SK-N-SH (cell line): ENCODE measurements at regions of chr2 and their contacts with region 1.

Region 1: GRCh38 chr2:38377050-38377828 is at the start of gene ATL2:
- DNase-seq: peak; percentile 99
- H3K4me3 ChIP-seq: peak within 1 kb of the TSS; percentile 91 to 94
- H3K27ac ChIP-seq: peak within 1 kb of the TSS; percentile 81 to 94
- H3K4me1 ChIP-seq: peaks cover 14 to 16% of the 10 kb centered on the region in 2 experiments; a peak in 3 of 4 replicates
- H3K27me3 ChIP-seq: no peaks in the 10 kb centered on the region
- CTCF ChIP-seq: no peak
- EP300 ChIP-seq: peak in 1 of 2 experiments; percentile 50; a peak in 2 of 4 replicates
- RAD21 ChIP-seq: no peak
- polyA plus RNA-seq, gene ATL2: 30.5 and 55.8 TPM in 2 replicates

Region 2: GRCh38 chr2:37973615-37974353 is 403.5 kb before region 1 on chr2:
- CTCF ChIA-PET with region 1: no interaction called
- POLR2A ChIA-PET with region 1: no interaction called
- DNase-seq: no peak
- H3K4me3 ChIP-seq: no peak overlapping the region
- H3K27ac ChIP-seq: no peak overlapping the region
- H3K4me1 ChIP-seq: no peaks in the 10 kb centered on the region; a peak in 1 of 4 replicates
- H3K27me3 ChIP-seq: no peaks in the 10 kb centered on the region
- CTCF ChIP-seq: no peak
- EP300 ChIP-seq: no peak
- RAD21 ChIP-seq: no peak

Region 3: DNA sequence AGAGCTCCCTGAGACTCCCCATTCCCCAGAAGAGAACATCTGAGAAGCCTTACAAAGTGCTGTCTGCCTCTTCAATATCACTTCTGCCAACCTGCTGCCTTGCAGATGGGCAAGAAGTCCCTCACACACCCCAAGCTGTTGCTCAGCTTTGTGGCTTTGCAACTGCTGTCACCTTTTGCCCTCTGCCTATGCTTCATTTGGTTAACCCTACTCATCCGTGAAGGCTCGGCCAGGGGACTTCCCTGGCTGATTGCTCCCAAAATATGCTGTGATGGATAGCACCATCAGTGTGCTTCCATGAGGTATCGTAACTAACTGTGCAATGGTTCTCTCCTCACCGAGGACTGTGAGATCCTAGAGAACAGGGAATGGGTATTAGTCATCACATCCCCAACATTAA is 212.4 kb before region 1 on chr2:
- CTCF ChIA-PET with region 1: no interaction called
- POLR2A ChIA-PET with region 1: no interaction called
- DNase-seq: no peak
- H3K4me3 ChIP-seq: no peak overlapping the region
- H3K27ac ChIP-seq: no peak overlapping the region
- H3K4me1 ChIP-seq: peaks cover 0 to 5% of the 10 kb centered on the region in 2 experiments; a peak in 1 of 4 replicates
- H3K27me3 ChIP-seq: no peaks in the 10 kb centered on the region
- CTCF ChIP-seq: no peak
- EP300 ChIP-seq: no peak
- RAD21 ChIP-seq: no peak

Region 4: GRCh38 chr2:38362232-38362631 is 15.0 kb before region 1 on chr2:
- CTCF ChIA-PET with region 1: interaction called, 53 read pairs
- POLR2A ChIA-PET with region 1: interaction called, 3 read pairs
- DNase-seq: no peak
- H3K4me3 ChIP-seq: no peak overlapping the region
- H3K27ac ChIP-seq: peak overlapping the region in 1 of 2 experiments; percentile 24; a peak in 1 of 4 replicates
- H3K4me1 ChIP-seq: peaks cover 2 to 9% of the 10 kb centered on the region in 2 experiments; a peak in 3 of 4 replicates
- H3K27me3 ChIP-seq: no peaks in the 10 kb centered on the region
- CTCF ChIP-seq: no peak
- EP300 ChIP-seq: no peak
- RAD21 ChIP-seq: no peak

Region 5: DNA sequence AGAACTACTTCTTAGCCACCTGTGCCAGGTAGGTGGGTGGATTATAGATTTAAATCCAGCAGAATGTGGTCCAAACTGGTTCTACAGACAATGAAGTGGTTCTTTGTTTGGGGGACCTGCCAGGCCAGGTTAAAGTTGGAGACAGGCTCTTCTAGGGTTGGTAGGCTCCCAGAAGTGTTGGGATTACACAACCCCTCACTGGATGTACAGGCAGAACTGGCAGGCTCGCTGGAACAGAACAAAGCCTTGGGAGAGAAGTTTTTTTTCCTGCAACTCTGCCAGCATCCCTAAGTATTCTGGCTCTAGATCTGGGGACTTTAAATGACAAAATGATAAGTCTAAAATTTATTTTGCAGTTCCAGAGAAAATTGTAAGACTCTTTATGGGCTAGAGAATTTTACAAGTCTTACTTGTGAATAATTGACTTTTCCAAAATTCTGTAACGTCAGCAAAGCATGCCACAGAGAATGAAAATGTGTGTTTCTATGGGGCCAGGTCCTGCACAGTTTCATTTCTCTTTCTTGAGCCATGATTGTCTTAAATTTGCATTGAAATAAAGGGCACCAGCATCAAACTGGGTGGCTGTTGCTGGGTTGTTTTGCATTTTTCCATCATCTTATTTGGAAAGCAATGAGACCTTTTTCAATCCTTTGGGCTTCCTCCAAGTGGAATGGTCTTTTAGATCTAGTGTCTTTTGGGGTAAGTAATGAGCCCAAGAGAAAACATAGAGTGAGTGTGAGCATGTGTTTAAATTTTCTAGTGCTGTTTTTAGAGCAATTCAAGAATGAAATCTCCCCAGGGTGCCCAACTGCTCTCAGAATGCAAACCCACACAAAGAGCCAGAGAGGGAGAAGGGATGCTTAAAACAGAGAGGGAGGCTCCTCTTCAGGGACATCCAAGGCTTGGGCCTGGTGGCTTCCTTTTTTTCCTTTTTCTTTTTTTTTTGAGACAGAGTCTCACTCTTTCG is 32.2 kb after region 1 on chr2:
- CTCF ChIA-PET with region 1: no interaction called
- POLR2A ChIA-PET with region 1: no interaction called
- DNase-seq: no peak
- H3K4me3 ChIP-seq: no peak overlapping the region
- H3K27ac ChIP-seq: no peak overlapping the region
- H3K4me1 ChIP-seq: no peaks in the 10 kb centered on the region
- H3K27me3 ChIP-seq: no peaks in the 10 kb centered on the region
- CTCF ChIP-seq: no peak
- EP300 ChIP-seq: no peak
- RAD21 ChIP-seq: no peak

Region 6: GRCh38 chr2:38466876-38467767 is 89.9 kb after region 1 on chr2:
- CTCF ChIA-PET with region 1: interaction called, 12 read pairs
- POLR2A ChIA-PET with region 1: interaction called, 3 read pairs
- DNase-seq: no peak
- H3K4me3 ChIP-seq: no peak overlapping the region
- H3K27ac ChIP-seq: no peak overlapping the region
- H3K4me1 ChIP-seq: peaks cover 0 to 13% of the 10 kb centered on the region in 2 experiments; a peak in 2 of 4 replicates
- H3K27me3 ChIP-seq: no peaks in the 10 kb centered on the region; the same call in 1 of the 2 replicates
- CTCF ChIP-seq: no peak
- EP300 ChIP-seq: no peak
- RAD21 ChIP-seq: no peak